B cell (primary cell): ENCODE measurements at regions of chr19 and their contacts with region 1.

Region 1: GRCh38 chr19:48398375-48399235 is 5.1 kb downstream of the GRIN2D start:
- DNase-seq: peak; percentile 90
- ATAC-seq: peak; percentile 70
- H3K4me3 ChIP-seq: peak overlapping the region in 4 of 5 experiments; percentile 24 to 65 (median 46)
- H3K4me3 Mint-ChIP-seq: peak overlapping the region; percentile 86
- H3K27ac ChIP-seq: no peak overlapping the region
- H3K27ac Mint-ChIP-seq: peak overlapping the region; percentile 80
- H3K4me1 ChIP-seq: peaks cover 42 to 43% of the 10 kb centered on the region in 2 donors
- H3K4me1 Mint-ChIP-seq: peaks cover 36% of the 10 kb centered on the region
- H3K27me3 ChIP-seq: peaks cover 0 to 44% (median 28%) of the 10 kb centered on the region in 4 experiments
- H3K27me3 Mint-ChIP-seq: peaks cover 29% of the 10 kb centered on the region
- CTCF ChIP-seq: no peak

Region 2: GRCh38 chr19:48255376-48256303 is 143.0 kb before region 1 on chr19 and contains the start of gene CARD8:
- CTCF ChIA-PET with region 1: no interaction called
- POLR2A ChIA-PET with region 1: no interaction called
- intact Hi-C with region 1: no loop called
- DNase-seq: peak; percentile 94
- ATAC-seq: peak; percentile 81
- H3K4me3 ChIP-seq: peak within 1 kb of the TSS; percentile 75 to 99 (median 96)
- H3K4me3 Mint-ChIP-seq: peak within 1 kb of the TSS; percentile 100
- H3K27ac ChIP-seq: peak within 1 kb of the TSS; percentile 92 to 93
- H3K27ac Mint-ChIP-seq: peak within 1 kb of the TSS; percentile 99
- H3K4me1 ChIP-seq: peaks cover 37 to 49% of the 10 kb centered on the region in 2 donors
- H3K4me1 Mint-ChIP-seq: peaks cover 61% of the 10 kb centered on the region
- H3K27me3 ChIP-seq: no peaks in the 10 kb centered on the region
- H3K27me3 Mint-ChIP-seq: no peaks in the 10 kb centered on the region
- CTCF ChIP-seq: no peak
- total RNA-seq, gene CARD8: 161 and 164 TPM in 2 replicates

Region 3: GRCh38 chr19:48419158-48419920 is 20.7 kb after region 1 on chr19:
- CTCF ChIA-PET with region 1: no interaction called
- POLR2A ChIA-PET with region 1: interaction called, 4 read pairs
- intact Hi-C with region 1: loop called (anchors 1 kb)
- DNase-seq: peak; percentile 80
- ATAC-seq: peak; percentile 82
- H3K4me3 ChIP-seq: peak overlapping the region in 4 of 5 experiments; percentile 10 to 43 (median 20)
- H3K4me3 Mint-ChIP-seq: peak overlapping the region; percentile 90
- H3K27ac ChIP-seq: no peak overlapping the region
- H3K27ac Mint-ChIP-seq: peak overlapping the region; percentile 80
- H3K4me1 ChIP-seq: peaks cover 16 to 17% of the 10 kb centered on the region in 2 donors
- H3K4me1 Mint-ChIP-seq: peaks cover 24% of the 10 kb centered on the region
- H3K27me3 ChIP-seq: peaks cover 0 to 43% (median 9%) of the 10 kb centered on the region in 4 experiments
- H3K27me3 Mint-ChIP-seq: peaks cover 35% of the 10 kb centered on the region
- CTCF ChIP-seq: no peak

Region 4: GRCh38 chr19:48468775-48469288 is 70.2 kb after region 1 on chr19:
- CTCF ChIA-PET with region 1: no interaction called
- POLR2A ChIA-PET with region 1: no interaction called
- intact Hi-C with region 1: loop called (anchors 2 kb)
- DNase-seq: peak; percentile 100
- ATAC-seq: peak; percentile 87
- H3K4me3 ChIP-seq: peak overlapping the region; percentile 8 to 90 (median 83)
- H3K4me3 Mint-ChIP-seq: peak overlapping the region; percentile 92
- H3K27ac ChIP-seq: peak overlapping the region; percentile 52 to 84
- H3K27ac Mint-ChIP-seq: peak overlapping the region; percentile 89
- H3K4me1 ChIP-seq: peaks cover 11 to 15% of the 10 kb centered on the region in 2 donors
- H3K4me1 Mint-ChIP-seq: peaks cover 17% of the 10 kb centered on the region
- H3K27me3 ChIP-seq: peaks cover 0 to 3% (median 0%) of the 10 kb centered on the region in 4 experiments
- H3K27me3 Mint-ChIP-seq: no peaks in the 10 kb centered on the region
- CTCF ChIP-seq: no peak